ENCODE measurements at regions of chr3 and their contacts with region 1.

Region 1: GRCh38 chr3:121545574-121546455 is at the start of gene POLQ:
- DNase-seq: peak; percentile 78 to 93
- ATAC-seq: peak; percentile 97 to 99 (median 99)
- H3K4me3 ChIP-seq: peak within 1 kb of the TSS; percentile 63
- H3K4me3 Mint-ChIP-seq: peak within 1 kb of the TSS; percentile 96
- H3K27ac ChIP-seq: peak within 1 kb of the TSS; percentile 72
- H3K27ac Mint-ChIP-seq: peak within 1 kb of the TSS; percentile 82 to 97
- H3K4me1 ChIP-seq: peaks cover 9% of the 10 kb centered on the region
- H3K4me1 Mint-ChIP-seq: peaks cover 13 to 21% of the 10 kb centered on the region in 2 donors
- H3K27me3 ChIP-seq: no peaks in the 10 kb centered on the region
- H3K27me3 Mint-ChIP-seq: no peaks in the 10 kb centered on the region
- CTCF ChIP-seq: no peak
- total RNA-seq, gene POLQ: 0.66 to 1.2 (median 0.70) TPM

Region 2: GRCh38 chr3:121529308-121529707 is 16.5 kb before region 1 on chr3:
- intact Hi-C with region 1: no loop called
- DNase-seq: no peak
- ATAC-seq: no peak
- H3K4me3 ChIP-seq: no peak overlapping the region
- H3K4me3 Mint-ChIP-seq: no peak overlapping the region
- H3K27ac ChIP-seq: no peak overlapping the region
- H3K27ac Mint-ChIP-seq: no peak overlapping the region
- H3K4me1 ChIP-seq: no peaks in the 10 kb centered on the region
- H3K4me1 Mint-ChIP-seq: no peaks in the 10 kb centered on the region
- H3K27me3 ChIP-seq: no peaks in the 10 kb centered on the region
- H3K27me3 Mint-ChIP-seq: no peaks in the 10 kb centered on the region
- CTCF ChIP-seq: no peak

Region 3: GRCh38 chr3:121749276-121750086 is 203.7 kb after region 1 on chr3 and contains the start of gene GOLGB1:
- intact Hi-C with region 1: loop called (anchors 5 kb)
- DNase-seq: peak; percentile 84 to 98
- ATAC-seq: peak; percentile 91 to 99 (median 93)
- H3K4me3 ChIP-seq: peak within 1 kb of the TSS; percentile 92
- H3K4me3 Mint-ChIP-seq: peak within 1 kb of the TSS; percentile 57
- H3K27ac ChIP-seq: peak within 1 kb of the TSS; percentile 98
- H3K27ac Mint-ChIP-seq: no peak within 1 kb of the TSS
- H3K4me1 ChIP-seq: peaks cover 12% of the 10 kb centered on the region
- H3K4me1 Mint-ChIP-seq: peaks cover 4 to 6% of the 10 kb centered on the region in 2 donors
- H3K27me3 ChIP-seq: no peaks in the 10 kb centered on the region
- H3K27me3 Mint-ChIP-seq: peaks cover 13 to 17% of the 10 kb centered on the region in 2 donors
- CTCF ChIP-seq: no peak
- total RNA-seq, gene GOLGB1: 55.4 to 67.2 (median 61.1) TPM

Region 4: DNA sequence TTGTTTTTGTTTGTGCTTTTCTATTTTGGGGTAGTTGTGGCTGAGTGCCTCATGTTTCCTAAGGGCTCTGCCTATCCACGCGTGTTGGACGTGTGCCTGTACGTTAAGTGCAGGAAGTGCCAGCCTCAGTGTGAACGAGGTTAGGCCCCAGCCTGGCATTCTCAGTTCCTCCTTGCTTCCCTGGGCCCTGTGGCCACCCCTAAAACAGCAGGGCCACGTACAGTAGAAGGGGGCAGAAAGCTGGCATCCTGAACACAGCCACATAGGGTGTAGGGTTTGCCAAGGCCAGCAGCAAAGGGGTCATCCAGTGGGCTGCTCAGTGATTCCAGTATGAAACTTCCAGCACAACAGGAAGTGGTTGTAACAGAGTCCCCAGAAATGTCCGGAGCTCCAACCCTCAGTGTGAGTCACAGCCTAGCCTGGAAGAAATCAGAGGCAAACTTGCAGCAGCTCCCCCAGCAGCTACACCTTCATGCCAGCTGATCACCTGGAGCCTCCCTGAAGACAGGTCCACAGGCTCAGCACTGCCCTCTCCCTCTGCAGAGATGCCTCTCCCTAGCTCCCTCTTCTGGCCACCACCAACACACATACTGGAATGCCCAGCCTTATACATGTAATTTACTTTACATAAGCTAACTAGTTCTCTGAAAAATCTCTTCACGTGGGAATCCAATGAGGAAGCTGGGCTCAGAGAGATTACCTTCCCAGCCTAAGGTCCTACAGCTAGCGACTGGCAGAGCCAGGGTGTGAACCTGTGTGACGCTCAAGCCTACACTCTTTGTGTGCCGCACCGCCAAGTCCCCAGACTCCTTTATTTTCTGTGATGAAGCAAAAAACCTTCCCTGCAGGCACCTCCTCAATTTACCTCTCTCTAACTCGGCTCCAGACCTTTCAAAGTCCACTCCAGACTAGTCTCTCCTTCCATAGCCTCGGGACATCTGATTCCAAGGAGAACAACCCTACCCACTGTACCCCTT is 449.6 kb after region 1 on chr3:
- intact Hi-C with region 1: loop called (anchors 10 kb)
- DNase-seq: peak in 1 of 2 donors; percentile 54
- ATAC-seq: peak; percentile 46 to 52 (median 46)
- H3K4me3 ChIP-seq: no peak overlapping the region
- H3K4me3 Mint-ChIP-seq: no peak overlapping the region
- H3K27ac ChIP-seq: peak overlapping the region; percentile 26
- H3K27ac Mint-ChIP-seq: peak overlapping the region in 1 of 2 donors; percentile 10
- H3K4me1 ChIP-seq: peaks cover 39% of the 10 kb centered on the region
- H3K4me1 Mint-ChIP-seq: peaks cover 0 to 16% of the 10 kb centered on the region in 2 donors
- H3K27me3 ChIP-seq: no peaks in the 10 kb centered on the region
- H3K27me3 Mint-ChIP-seq: no peaks in the 10 kb centered on the region
- CTCF ChIP-seq: no peak

Region 5: DNA sequence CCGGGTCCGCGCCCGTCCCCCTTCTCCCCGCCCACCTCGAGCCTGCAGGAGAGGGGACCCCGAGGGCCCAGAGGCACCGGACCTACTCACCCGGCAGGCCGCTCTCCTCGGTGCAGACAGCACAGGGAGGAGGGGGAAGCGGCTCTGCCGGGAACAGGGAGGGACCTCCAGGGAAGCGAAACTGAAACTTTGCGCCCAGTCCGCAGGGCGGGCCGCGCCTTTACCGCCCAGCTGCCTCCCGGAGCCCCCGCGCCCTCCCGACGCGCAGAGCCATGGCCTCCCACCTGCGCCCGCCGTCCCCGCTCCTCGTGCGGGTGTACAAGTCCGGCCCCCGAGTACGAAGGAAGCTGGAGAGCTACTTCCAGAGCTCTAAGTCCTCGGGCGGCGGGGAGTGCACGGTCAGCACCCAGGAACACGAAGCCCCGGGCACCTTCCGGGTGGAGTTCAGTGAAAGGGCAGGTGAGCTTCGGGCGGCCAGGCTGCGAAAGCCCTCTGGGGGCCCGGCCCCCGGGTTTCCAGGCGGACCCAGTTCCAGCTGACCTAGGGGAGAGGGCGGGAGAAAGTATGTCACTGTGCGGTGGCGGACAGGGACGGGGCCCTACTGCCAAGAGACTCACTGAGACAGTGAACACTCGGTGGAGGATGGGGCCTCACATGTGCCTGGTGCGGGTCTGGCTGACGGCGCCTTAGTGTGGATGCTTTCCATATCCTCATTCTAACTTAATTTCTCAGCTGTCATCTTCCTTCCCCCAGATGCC is 1018.5 kb after region 1 on chr3 and contains the starts of genes DTX3L and PARP9:
- intact Hi-C with region 1: loop called (anchors 2 kb)
- DNase-seq: peak; percentile 75 to 89
- ATAC-seq: peak; percentile 91 to 97 (median 93)
- H3K4me3 ChIP-seq: peak within 1 kb of the TSS; percentile 77
- H3K4me3 Mint-ChIP-seq: peak within 1 kb of the TSS; percentile 93
- H3K27ac ChIP-seq: peak within 1 kb of the TSS; percentile 89
- H3K27ac Mint-ChIP-seq: peak within 1 kb of the TSS; percentile 86 to 97
- H3K4me1 ChIP-seq: peaks cover 34% of the 10 kb centered on the region
- H3K4me1 Mint-ChIP-seq: peaks cover 77% of the 10 kb centered on the region in 2 donors
- H3K27me3 ChIP-seq: no peaks in the 10 kb centered on the region
- H3K27me3 Mint-ChIP-seq: no peaks in the 10 kb centered on the region
- CTCF ChIP-seq: no peak
- total RNA-seq, gene DTX3L: 40.8 to 61.0 (median 51.8) TPM
- total RNA-seq, gene PARP9: 23.8 to 41.1 (median 38.5) TPM

Region 6: GRCh38 chr3:123028233-123028828 is 1482.5 kb after region 1 on chr3:
- intact Hi-C with region 1: loop called (anchors 2 kb)
- DNase-seq: peak in 1 of 2 donors; percentile 51
- ATAC-seq: peak in 2 of 3 donors; percentile 18 to 33
- H3K4me3 ChIP-seq: peak overlapping the region; percentile 32
- H3K4me3 Mint-ChIP-seq: peak overlapping the region; percentile 41
- H3K27ac ChIP-seq: no peak overlapping the region
- H3K27ac Mint-ChIP-seq: no peak overlapping the region
- H3K4me1 ChIP-seq: peaks cover 23% of the 10 kb centered on the region
- H3K4me1 Mint-ChIP-seq: peaks cover 4 to 25% of the 10 kb centered on the region in 2 donors
- H3K27me3 ChIP-seq: peaks cover 41% of the 10 kb centered on the region
- H3K27me3 Mint-ChIP-seq: peaks cover 42 to 44% of the 10 kb centered on the region in 2 donors
- CTCF ChIP-seq: peak; percentile 19